Psoas muscle (tissue), 8 donors: ENCODE measurements at regions of chr19 and their contacts with region 1.

Region 1: GRCh38 chr19:5891938-5892771 is 11.4 kb downstream of the NDUFA11 start:
- DNase-seq: no peak
- ATAC-seq: peak; percentile 46 to 70 (median 63)
- H3K4me3 ChIP-seq: no peak overlapping the region
- H3K27ac ChIP-seq: no peak overlapping the region
- H3K4me1 ChIP-seq: peaks cover 5% of the 10 kb centered on the region
- H3K27me3 ChIP-seq: peaks cover 0 to 33% (median 3%) of the 10 kb centered on the region in 3 donors
- CTCF ChIP-seq: peak; percentile 58

Region 2: GRCh38 chr19:5803752-5804515 is 88.2 kb before region 1 on chr19:
- intact Hi-C with region 1: loop called in 1 of 2 experiments (anchors 2 kb)
- DNase-seq: peak; percentile 82 to 85
- ATAC-seq: peak; percentile 74 to 86 (median 84)
- H3K4me3 ChIP-seq: peak overlapping the region; percentile 43
- H3K27ac ChIP-seq: no peak overlapping the region
- H3K4me1 ChIP-seq: no peaks in the 10 kb centered on the region
- H3K27me3 ChIP-seq: peaks cover 0 to 78% (median 35%) of the 10 kb centered on the region in 3 donors
- CTCF ChIP-seq: peak; percentile 72